ENCODE measurements at regions of chr9 and their contacts with region 1.

Region 1: DNA sequence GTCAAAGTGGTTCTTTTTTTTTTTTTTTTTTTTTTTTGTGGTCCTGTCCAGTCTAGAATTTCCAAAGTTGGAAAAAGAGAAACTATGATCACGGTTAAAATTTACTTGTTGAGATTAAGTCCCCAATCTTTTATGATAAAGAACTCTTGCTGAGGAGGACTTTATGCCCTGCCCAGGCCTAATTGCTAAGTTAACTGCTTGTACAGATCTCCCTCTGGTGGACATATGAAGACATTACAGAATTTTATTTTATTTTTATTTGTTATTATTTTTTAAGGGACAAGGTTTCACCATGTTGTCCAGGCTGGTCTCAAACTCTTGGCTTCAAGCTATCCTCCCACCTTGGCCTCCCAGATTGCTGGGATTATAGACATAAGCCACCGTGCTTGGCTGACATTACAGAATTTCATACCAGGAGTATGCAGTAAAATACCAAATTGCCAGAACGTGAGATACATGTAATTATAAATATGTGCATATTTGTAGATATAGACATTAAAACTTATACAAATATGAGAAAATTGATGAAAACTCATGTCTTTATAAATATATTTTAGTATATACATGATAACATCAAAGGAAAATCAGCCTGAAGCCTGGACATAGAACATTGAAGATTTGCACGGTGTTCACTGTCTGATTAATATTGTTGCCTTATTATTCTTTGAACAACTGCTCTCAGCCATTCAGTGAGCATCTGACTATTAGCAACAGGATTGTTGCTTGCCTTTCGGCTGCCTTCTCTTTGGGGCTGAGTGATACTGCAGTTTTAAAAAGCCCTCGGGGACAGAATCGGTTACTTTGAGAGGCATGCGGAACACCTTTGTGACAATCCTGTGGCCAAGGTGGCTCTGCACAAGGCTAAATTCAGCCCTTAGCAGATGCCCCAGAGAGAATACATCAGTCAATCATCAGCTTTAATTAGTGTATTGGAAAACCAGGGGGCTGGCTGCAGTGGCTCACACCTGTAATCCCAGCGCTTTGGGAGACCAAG is 91.0 kb downstream of the RFK start:
- DNase-seq: peak; percentile 58
- H3K4me3 ChIP-seq: no peak overlapping the region
- H3K27ac ChIP-seq: no peak overlapping the region
- H3K4me1 ChIP-seq: no peaks in the 10 kb centered on the region
- H3K27me3 ChIP-seq: peaks cover 4 to 7% of the 10 kb centered on the region in 2 experiments
- CTCF ChIP-seq: peak; percentile 20 to 27
- POLR2A ChIP-seq: no peak

Region 2: GRCh38 chr9:75200892-75201470 is 1102.3 kb before region 1 on chr9:
- CTCF ChIA-PET with region 1: no interaction called
- POLR2A ChIA-PET with region 1: no interaction called
- dilution Hi-C with region 1: no loop called
- intact Hi-C with region 1: loop called (anchors 2 kb)
- DNase-seq: peak; percentile 62
- H3K4me3 ChIP-seq: no peak overlapping the region
- H3K27ac ChIP-seq: no peak overlapping the region
- H3K4me1 ChIP-seq: no peaks in the 10 kb centered on the region
- H3K27me3 ChIP-seq: peaks cover 0 to 3% of the 10 kb centered on the region in 2 experiments
- CTCF ChIP-seq: peak in 1 of 2 donors; percentile 37
- POLR2A ChIP-seq: no peak

Region 3: DNA sequence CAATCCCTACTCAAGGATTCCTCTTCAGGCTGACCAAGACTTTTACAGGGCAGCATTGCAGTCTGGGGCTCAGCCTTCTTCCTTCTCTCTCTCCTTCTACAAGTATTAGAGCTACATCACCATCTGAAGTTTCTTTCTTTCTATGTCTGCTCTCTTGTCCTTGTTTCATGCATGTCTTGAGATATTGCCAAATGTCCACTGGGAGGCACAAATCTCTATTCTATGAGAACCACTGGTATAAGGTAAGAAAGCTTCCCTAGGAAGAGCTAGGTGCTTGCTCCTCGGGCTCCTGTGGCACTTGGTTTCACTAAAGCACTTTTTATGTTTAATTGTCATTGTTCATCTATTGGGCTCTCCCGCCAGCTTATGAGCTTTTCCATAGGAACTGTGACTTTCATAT is 702.0 kb before region 1 on chr9:
- CTCF ChIA-PET with region 1: no interaction called
- POLR2A ChIA-PET with region 1: no interaction called
- dilution Hi-C with region 1: no loop called
- intact Hi-C with region 1: loop called (anchors 2 kb)
- DNase-seq: no peak
- H3K4me3 ChIP-seq: no peak overlapping the region
- H3K27ac ChIP-seq: no peak overlapping the region
- H3K4me1 ChIP-seq: no peaks in the 10 kb centered on the region
- H3K27me3 ChIP-seq: no peaks in the 10 kb centered on the region
- CTCF ChIP-seq: no peak
- POLR2A ChIP-seq: no peak

Region 4: DNA sequence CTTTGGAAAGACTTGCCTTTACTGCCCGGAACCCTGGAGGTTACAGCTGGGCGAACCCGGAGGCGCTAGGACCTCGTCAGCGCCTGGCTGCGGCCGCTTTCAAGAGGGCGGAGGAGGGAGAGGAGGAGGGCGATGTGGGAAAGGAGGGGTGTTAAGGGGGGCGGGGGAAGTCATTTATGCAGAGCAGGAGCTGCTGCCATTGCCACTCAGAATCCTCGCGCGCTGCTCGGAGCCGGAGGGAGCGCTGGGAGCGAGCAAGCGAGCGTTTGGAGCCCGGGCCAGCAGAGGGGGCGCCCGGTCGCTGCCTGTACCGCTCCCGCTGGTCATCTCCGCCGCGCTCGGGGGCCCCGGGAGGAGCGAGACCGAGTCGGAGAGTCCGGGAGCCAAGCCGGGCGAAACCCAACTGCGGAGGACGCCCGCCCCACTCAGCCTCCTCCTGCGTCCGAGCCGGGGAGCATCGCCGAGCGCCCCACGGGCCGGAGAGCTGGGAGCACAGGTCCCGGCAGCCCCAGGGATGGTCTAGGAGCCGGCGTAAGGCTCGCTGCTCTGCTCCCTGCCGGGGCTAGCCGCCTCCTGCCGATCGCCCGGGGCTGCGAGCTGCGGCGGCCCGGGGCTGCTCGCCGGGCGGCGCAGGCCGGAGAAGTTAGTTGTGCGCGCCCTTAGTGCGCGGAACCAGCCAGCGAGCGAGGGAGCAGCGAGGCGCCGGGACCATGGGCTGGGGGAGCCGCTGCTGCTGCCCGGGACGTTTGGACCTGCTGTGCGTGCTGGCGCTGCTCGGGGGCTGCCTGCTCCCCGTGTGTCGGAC is 412.6 kb before region 1 on chr9 and contains the start of gene PCSK5:
- CTCF ChIA-PET with region 1: interaction called, 13 read pairs
- POLR2A ChIA-PET with region 1: no interaction called
- dilution Hi-C with region 1: no loop called
- intact Hi-C with region 1: loop called (anchors 2 kb)
- DNase-seq: peak; percentile 94
- H3K4me3 ChIP-seq: peak within 1 kb of the TSS; percentile 66 to 90 (median 87)
- H3K27ac ChIP-seq: peak within 1 kb of the TSS; percentile 39
- H3K4me1 ChIP-seq: peaks cover 18% of the 10 kb centered on the region
- H3K27me3 ChIP-seq: peaks cover 0 to 6% of the 10 kb centered on the region in 2 experiments
- CTCF ChIP-seq: peak; percentile 7 to 41
- POLR2A ChIP-seq: peak; percentile 71
- total RNA-seq, gene PCSK5: 4.8 and 5.1 TPM in 2 replicates

Region 5: DNA sequence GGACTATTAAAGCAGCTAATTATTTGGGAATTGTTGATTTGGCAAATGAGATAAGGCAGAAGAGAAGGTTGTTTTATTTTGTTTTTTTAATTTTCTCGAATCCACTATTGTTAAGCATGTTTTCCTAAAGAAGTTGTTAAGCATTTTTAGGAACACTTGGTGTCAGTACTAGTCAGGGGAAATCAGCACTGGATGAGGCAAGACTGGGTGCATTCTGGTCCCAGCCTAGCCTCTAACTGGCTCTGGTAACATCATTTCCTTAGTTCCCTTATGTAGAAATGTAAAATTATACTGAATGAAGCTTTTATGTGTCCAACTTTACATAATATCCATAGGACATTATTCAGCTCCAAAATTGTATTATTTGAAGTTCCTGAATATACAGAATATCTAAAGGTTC is 216.7 kb before region 1 on chr9:
- CTCF ChIA-PET with region 1: no interaction called
- POLR2A ChIA-PET with region 1: no interaction called
- dilution Hi-C with region 1: no loop called
- intact Hi-C with region 1: loop called (anchors 10 kb)
- DNase-seq: no peak
- H3K4me3 ChIP-seq: no peak overlapping the region
- H3K27ac ChIP-seq: no peak overlapping the region
- H3K4me1 ChIP-seq: no peaks in the 10 kb centered on the region
- H3K27me3 ChIP-seq: no peaks in the 10 kb centered on the region
- CTCF ChIP-seq: no peak
- POLR2A ChIP-seq: no peak

Region 6: GRCh38 chr9:76292246-76292645 is 11.0 kb before region 1 on chr9:
- CTCF ChIA-PET with region 1: interaction called, 35 read pairs
- POLR2A ChIA-PET with region 1: no interaction called
- dilution Hi-C with region 1: no loop called
- intact Hi-C with region 1: no loop called
- DNase-seq: no peak
- H3K4me3 ChIP-seq: no peak overlapping the region
- H3K27ac ChIP-seq: no peak overlapping the region
- H3K4me1 ChIP-seq: no peaks in the 10 kb centered on the region
- H3K27me3 ChIP-seq: no peaks in the 10 kb centered on the region
- CTCF ChIP-seq: no peak
- POLR2A ChIP-seq: no peak